Posterior vena cava (tissue), 2 donors: ENCODE measurements at regions of chr5 and their contacts with region 1.

Region 1: GRCh38 chr5:17076272-17076671 is 140.2 kb upstream of the MYO10 start:
- DNase-seq: no peak

Region 2: GRCh38 chr5:17123010-17123409 is 46.7 kb after region 1 on chr5:
- intact Hi-C with region 1: loop called in 1 of 2 experiments (anchors 1 kb)
- DNase-seq: no peak